RWPE1 (cell line): ENCODE measurements at regions of chr11 and their contacts with region 1.

Region 1: GRCh38 chr11:123246749-123247495 is 51.9 kb upstream of the CLMP start:
- DNase-seq: peak; percentile 77
- H3K27ac ChIP-seq: no peak overlapping the region
- CTCF ChIP-seq: peak; percentile 96

Region 2: DNA sequence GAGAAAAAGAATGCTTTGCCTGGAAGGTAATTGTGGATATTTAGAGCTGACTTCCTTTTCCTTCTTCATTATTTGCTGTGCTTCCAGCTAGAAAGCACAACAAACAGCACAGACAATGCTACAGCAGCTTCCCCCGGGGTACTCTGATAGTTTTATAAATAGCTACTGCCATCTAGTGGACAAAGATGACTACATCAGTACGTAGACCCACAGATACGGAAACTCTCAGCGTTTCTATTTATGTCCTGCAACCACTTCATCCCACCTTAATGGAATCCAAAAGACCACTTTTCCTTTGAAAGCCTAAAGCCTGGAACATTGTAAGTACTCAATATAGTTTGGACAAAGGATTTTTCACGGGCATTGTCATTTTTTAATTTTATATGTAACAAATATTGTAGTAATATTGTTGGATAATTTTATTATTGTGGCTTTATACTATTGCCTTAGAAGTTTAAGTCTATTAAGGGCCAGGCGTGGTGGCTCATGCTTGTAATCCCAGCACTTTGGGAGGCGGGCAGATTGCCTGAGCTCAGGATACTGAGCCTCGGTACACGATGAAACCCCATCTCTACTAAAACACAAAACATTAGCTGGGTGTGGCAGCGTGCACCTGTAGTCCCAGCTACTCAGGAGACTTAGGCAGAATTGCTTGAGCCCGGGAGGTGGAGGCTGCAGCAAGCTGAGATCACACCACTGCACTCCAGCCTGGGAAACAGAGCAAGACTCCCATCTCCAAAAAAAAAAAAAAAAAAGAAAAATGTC is 192.4 kb before region 1 on chr11:
- CTCF ChIA-PET with region 1: no interaction called
- POLR2A ChIA-PET with region 1: interaction called, 12 read pairs
- DNase-seq: peak; percentile 73
- H3K27ac ChIP-seq: peak overlapping the region; percentile 62
- CTCF ChIP-seq: peak; percentile 73

Region 3: DNA sequence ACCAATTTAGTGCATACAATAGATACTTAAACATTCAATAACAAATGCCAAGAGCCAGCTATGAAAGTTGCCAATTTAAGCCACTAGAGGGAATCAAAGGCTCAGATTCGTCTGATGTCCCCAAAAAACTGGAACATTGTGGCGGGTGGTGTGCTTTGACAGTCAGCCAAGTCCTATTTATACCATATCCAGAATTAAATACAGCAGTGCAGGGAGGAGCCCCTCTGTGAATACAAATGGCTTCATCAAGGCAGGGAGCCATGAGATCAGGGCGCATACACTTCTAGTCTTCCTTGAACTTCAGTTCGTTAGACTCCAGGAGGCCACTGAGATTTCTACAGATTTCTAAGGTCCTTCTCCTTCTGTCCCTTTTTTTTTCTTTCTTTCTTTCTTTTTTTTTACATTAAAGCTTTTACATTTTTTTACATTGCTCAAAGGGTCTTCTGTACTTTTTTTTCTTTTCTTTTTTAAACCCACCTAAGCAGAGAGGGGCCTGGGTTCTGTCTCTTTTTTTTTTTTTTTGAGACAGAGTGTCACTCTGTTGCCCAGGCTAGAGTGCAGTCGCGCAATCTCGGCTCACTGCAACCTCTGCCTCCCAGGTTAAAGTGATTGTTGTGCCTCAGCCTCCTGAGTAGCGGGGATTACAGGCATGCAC is 143.5 kb before region 1 on chr11:
- CTCF ChIA-PET with region 1: interaction called, 64 read pairs
- POLR2A ChIA-PET with region 1: no interaction called
- DNase-seq: peak; percentile 34
- H3K27ac ChIP-seq: peak overlapping the region; percentile 30; the same call in 1 of the 2 replicates
- CTCF ChIP-seq: peak; percentile 78

Region 4: GRCh38 chr11:123110356-123110755 is 136.6 kb before region 1 on chr11:
- CTCF ChIA-PET with region 1: interaction called, 64 read pairs
- POLR2A ChIA-PET with region 1: no interaction called
- DNase-seq: no peak
- H3K27ac ChIP-seq: no peak overlapping the region
- CTCF ChIP-seq: no peak

Region 5: DNA sequence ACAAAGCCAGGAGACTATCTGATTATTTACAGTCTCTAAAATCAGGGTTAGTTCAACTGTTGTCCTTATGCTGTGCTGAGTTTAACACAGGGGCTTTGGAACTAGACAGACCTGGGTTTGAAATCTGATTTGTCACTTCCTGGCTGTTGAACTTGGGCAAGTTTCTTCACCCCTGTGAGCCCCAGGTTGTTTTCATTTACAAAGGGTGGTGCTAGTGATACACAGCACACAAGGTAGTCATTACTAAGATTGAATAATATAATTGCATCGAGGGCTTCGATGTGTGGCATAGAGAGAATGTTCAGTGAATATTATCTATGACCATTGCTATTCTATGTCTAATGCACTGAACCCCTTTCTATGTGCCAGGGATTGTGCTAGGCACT is 88.3 kb before region 1 on chr11:
- CTCF ChIA-PET with region 1: no interaction called
- POLR2A ChIA-PET with region 1: no interaction called
- DNase-seq: peak; percentile 25
- H3K27ac ChIP-seq: peak overlapping the region; percentile 21; the same call in 1 of the 2 replicates
- CTCF ChIP-seq: no peak

Region 6: GRCh38 chr11:123261345-123262106 is 14.6 kb after region 1 on chr11:
- CTCF ChIA-PET with region 1: interaction called, 16 read pairs
- POLR2A ChIA-PET with region 1: no interaction called
- DNase-seq: peak; percentile 70
- H3K27ac ChIP-seq: no peak overlapping the region
- CTCF ChIP-seq: peak; percentile 90

Region 7: DNA sequence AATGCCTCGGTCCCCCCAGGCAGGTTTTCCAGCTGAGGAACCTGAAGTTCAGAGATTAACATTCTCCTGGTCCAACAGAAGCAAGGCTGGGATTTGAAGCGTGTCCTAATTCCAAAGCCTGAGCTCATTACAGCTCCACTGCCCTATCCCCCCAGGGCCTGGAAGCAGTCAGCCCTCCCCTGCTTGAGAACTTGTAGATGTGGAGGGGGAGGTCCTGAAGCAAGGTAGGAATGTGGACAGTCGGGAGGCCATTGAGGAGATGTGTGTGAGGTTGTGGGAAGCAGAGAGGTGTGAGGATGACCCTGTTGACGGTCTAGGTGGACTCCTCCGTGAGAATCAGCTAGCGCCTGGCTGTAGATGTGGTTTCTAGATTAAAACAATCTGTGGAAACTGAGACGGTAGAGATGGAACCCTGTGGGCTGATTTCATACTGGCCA is 191.3 kb after region 1 on chr11:
- CTCF ChIA-PET with region 1: no interaction called
- POLR2A ChIA-PET with region 1: no interaction called
- DNase-seq: no peak
- H3K27ac ChIP-seq: no peak overlapping the region
- CTCF ChIP-seq: no peak

Region 8: GRCh38 chr11:123478352-123478987 is 231.5 kb after region 1 on chr11:
- CTCF ChIA-PET with region 1: interaction called, 10 read pairs
- POLR2A ChIA-PET with region 1: no interaction called
- DNase-seq: peak; percentile 69
- H3K27ac ChIP-seq: no peak overlapping the region
- CTCF ChIP-seq: peak; percentile 72